HCT116 (cell line): ENCODE measurements at regions of chr7 and their contacts with region 1.

Region 1: GRCh38 chr7:87875151-87876039 is 765 bp downstream of the SLC25A40 start:
- DNase-seq: no peak
- ATAC-seq: peak; percentile 13
- H3K4me3 ChIP-seq: peak overlapping the region; percentile 75 to 80
- H3K27ac ChIP-seq: peak overlapping the region; percentile 96
- H3K4me1 ChIP-seq: peaks cover 3 to 18% of the 10 kb centered on the region in 2 experiments; a peak in 3 of 4 replicates
- H3K27me3 ChIP-seq: no peaks in the 10 kb centered on the region
- CTCF ChIP-seq: no peak
- POLR2A ChIP-seq: no peak
- RAD21 ChIP-seq: no peak

Region 2: DNA sequence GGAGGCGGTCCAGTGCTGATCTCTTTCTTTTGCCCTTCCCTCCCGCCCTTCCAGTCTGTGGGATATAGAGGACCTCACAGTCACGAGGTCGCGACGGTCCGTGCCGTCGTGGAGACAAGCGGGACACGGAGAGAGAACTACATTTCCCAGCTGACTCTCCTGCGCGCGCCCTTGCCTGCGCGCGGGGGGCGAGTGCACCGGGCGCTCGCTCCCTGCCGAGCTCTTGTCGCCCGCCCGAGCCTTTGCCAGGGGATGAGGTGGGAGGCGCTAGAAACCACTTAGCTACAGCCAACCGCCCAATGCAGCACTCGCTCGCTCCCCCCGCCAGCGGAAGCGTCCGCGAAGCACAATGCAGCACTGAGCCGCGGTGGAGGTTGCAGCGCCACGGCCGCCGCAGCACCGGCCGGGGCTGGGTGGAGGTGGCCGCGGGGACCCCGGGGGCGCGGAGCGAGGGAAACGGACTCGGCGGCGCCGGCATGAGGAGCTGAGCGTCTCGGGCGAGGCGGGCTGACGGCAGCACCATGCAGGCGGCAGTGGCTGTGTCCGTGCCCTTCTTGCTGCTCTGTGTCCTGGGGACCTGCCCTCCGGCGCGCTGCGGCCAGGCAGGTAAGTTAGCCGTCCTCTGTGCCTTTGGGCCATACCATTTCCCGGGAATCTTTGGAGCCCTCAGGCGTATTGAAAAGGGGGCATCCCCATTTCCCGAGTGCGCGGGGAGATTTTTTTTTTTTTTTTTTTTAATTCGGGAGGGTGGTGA is 58.7 kb after region 1 on chr7 and contains the start of gene ADAM22:
- CTCF ChIA-PET with region 1: no interaction called
- POLR2A ChIA-PET with region 1: no interaction called
- RAD21 ChIA-PET with region 1: no interaction called
- intact Hi-C with region 1: loop called (anchors 2 kb)
- DNase-seq: peak; percentile 87
- ATAC-seq: peak; percentile 97
- H3K4me3 ChIP-seq: peak within 1 kb of the TSS; percentile 79 to 81
- H3K27ac ChIP-seq: peak within 1 kb of the TSS; percentile 46; the same call in 1 of the 2 replicates
- H3K4me1 ChIP-seq: peaks cover 3 to 12% of the 10 kb centered on the region in 2 experiments; a peak in 3 of 4 replicates
- H3K27me3 ChIP-seq: no peaks in the 10 kb centered on the region
- CTCF ChIP-seq: no peak
- POLR2A ChIP-seq: peak; percentile 62
- RAD21 ChIP-seq: no peak; the same call in 1 of the 2 replicates
- total RNA-seq, gene ADAM22: 10.0 TPM

Region 3: GRCh38 chr7:87944531-87944930 is 69.1 kb after region 1 on chr7:
- CTCF ChIA-PET with region 1: no interaction called
- POLR2A ChIA-PET with region 1: no interaction called
- RAD21 ChIA-PET with region 1: no interaction called
- intact Hi-C with region 1: no loop called
- DNase-seq: no peak
- ATAC-seq: no peak
- H3K4me3 ChIP-seq: no peak overlapping the region
- H3K27ac ChIP-seq: no peak overlapping the region
- H3K4me1 ChIP-seq: no peaks in the 10 kb centered on the region
- H3K27me3 ChIP-seq: no peaks in the 10 kb centered on the region
- CTCF ChIP-seq: no peak
- POLR2A ChIP-seq: no peak
- RAD21 ChIP-seq: no peak